Heart right ventricle (tissue), 16 donors: ENCODE measurements at regions of chr1 and their contacts with region 1.

Region 1: GRCh38 chr1:96966536-96967138 is 245.1 kb downstream of the PTBP2 start:
- DNase-seq: peak; percentile 55 to 74
- ATAC-seq: peak in 5 of 8 donors; percentile 62 to 76 (median 67)
- H3K4me3 ChIP-seq: peak overlapping the region in 1 of 10 donors; percentile 1
- H3K27ac ChIP-seq: no peak overlapping the region
- H3K4me1 ChIP-seq: peaks cover 0 to 15% (median 0%) of the 10 kb centered on the region in 9 donors
- H3K27me3 ChIP-seq: peaks cover 0 to 30% (median 10%) of the 10 kb centered on the region in 7 donors
- CTCF ChIP-seq: peak; percentile 81 to 96 (median 92)

Region 2: GRCh38 chr1:96955307-96956012 is 11.2 kb before region 1 on chr1:
- intact Hi-C with region 1: no loop called
- DNase-seq: no peak
- ATAC-seq: no peak
- H3K4me3 ChIP-seq: no peak overlapping the region
- H3K27ac ChIP-seq: no peak overlapping the region
- H3K4me1 ChIP-seq: no peaks in the 10 kb centered on the region
- H3K27me3 ChIP-seq: no peaks in the 10 kb centered on the region
- CTCF ChIP-seq: no peak

Region 3: DNA sequence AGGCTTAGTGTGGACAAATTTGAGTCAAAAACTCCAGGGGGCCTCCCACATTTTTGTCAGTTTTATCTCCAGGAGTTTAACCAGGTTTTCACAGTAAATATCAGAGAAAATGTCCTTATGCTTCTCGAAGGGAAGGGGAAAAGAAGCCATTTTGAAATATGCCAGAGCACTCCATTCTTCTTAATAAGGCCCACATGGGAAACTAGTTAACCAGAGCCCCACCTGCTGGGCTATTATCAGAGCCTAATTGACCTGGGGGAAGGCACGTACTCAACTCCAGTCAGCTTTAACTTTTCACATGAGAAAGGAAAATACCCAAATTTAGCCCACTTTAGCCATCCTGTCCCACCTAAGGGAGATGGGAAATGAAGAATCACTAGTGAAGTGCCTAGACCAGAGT is 51.3 kb after region 1 on chr1:
- intact Hi-C with region 1: loop called in 1 of 10 experiments (anchors 5 kb)
- DNase-seq: no peak
- ATAC-seq: no peak
- H3K4me3 ChIP-seq: no peak overlapping the region
- H3K27ac ChIP-seq: no peak overlapping the region
- H3K4me1 ChIP-seq: peaks cover 0 to 10% (median 0%) of the 10 kb centered on the region in 9 donors
- H3K27me3 ChIP-seq: no peaks in the 10 kb centered on the region
- CTCF ChIP-seq: no peak

Region 4: DNA sequence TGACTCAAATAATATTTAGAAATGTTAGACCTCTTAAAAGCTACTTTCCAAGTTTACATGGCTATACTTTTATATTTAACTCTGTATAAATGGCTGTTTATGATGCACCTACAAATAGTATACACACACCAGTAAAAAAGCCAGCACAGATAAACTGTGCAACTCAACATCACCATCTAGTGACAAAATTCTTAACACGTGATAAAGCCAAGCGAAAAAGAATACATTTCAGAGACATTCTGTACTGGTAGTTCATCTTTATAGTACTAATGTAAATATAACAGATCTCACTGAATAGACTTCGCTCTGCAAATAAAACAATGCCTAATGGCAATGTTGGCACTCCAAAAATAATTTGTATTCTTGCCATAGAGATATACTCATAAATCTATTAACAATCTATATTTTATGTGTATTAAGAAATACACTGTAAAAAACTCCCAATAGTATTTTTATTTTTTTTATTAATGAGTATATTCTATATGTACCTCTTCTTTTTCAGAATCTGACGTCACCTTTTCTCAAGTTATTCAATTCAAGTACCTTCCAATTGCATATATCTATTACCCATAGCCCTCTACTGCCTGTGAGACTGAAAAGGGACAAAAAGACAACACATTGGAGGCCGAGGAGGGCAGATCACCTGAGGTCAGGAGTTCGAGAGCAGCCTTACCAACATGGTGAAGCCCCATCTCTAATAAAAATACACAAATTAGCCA is 854.0 kb after region 1 on chr1:
- intact Hi-C with region 1: loop called in 1 of 10 experiments (anchors 10 kb)
- DNase-seq: no peak
- ATAC-seq: peak in 3 of 8 donors; percentile 48 to 55 (median 52)
- H3K4me3 ChIP-seq: no peak overlapping the region
- H3K27ac ChIP-seq: no peak overlapping the region
- H3K4me1 ChIP-seq: peaks cover 0 to 10% (median 5%) of the 10 kb centered on the region in 9 donors
- H3K27me3 ChIP-seq: no peaks in the 10 kb centered on the region
- CTCF ChIP-seq: peak; percentile 21 to 74 (median 59)

Region 5: DNA sequence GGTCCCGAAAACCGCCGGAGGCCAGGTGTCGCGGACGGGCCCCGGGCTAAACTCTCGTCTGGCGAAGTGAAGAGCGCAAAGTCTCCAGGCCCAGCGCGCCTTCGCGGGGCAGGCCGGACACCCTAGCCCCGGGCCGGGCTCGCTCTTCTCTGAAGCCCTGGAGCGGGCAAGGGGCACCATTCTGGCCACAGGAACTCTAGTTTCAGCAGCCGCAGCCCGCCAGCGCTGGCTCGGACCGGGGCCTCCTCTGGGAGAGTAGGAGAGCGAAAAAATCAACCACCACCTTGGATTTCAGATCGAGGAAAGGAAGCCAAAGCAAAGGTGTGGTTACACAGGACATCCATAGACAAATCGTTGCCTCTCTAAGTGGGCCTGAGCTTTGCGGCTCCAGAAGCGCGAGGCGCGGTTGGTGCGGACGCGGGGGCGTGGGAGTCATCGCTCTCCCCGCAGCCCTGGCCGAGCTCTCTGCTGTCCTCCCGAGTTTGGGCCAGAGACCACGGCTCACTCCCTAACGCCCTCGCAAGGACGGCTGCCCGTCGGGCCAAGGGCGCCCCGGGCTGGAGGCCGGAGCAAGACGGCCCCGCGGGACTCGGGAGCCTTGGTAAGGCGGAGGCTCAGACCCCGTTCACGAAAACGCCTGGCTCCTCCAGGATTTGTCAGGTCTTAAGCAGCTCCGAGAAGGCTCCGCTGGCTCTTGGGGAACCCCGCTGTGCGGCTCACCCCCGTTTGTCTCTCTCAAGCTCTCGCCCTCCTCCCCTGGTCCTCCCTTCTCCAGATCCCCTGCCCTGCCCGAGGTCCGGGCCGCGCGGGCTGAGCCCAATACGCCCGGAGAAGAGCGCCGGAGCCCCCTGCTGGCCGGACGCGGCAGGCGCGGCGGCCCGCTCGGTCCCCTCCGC is 1087.1 kb after region 1 on chr1:
- intact Hi-C with region 1: loop called in 9 of 10 experiments (anchors 5 kb)
- DNase-seq: peak; percentile 18 to 65
- ATAC-seq: peak; percentile 92 to 99 (median 96)
- H3K4me3 ChIP-seq: peak overlapping the region; percentile 7 to 59 (median 55)
- H3K27ac ChIP-seq: no peak overlapping the region
- H3K4me1 ChIP-seq: peaks cover 0 to 20% (median 12%) of the 10 kb centered on the region in 9 donors
- H3K27me3 ChIP-seq: peaks cover 0 to 96% (median 83%) of the 10 kb centered on the region in 7 donors
- CTCF ChIP-seq: peak; percentile 83 to 97 (median 89)

Region 6: DNA sequence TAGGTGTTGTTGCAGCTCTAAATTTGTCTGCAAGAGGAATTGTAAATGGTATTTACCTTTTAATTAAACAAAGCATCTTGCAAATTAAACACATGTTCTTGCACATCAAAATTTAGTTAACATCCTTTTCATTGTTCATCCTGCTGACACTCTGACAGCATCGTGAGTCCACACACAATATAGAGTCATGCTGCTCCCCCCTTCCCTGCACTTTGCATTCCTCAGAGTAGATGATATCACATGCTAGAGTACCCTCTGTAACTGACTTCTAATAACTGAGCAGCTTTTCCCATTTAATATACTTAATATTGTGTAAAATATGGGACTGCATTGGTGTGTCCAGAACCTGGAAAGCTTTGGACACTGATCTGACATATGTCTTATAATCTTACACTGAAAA is 1093.0 kb after region 1 on chr1:
- intact Hi-C with region 1: loop called in 9 of 10 experiments (anchors 5 kb)
- DNase-seq: no peak
- ATAC-seq: no peak
- H3K4me3 ChIP-seq: no peak overlapping the region
- H3K27ac ChIP-seq: no peak overlapping the region
- H3K4me1 ChIP-seq: no peaks in the 10 kb centered on the region
- H3K27me3 ChIP-seq: peaks cover 0 to 56% (median 36%) of the 10 kb centered on the region in 7 donors
- CTCF ChIP-seq: no peak

Region 7: GRCh38 chr1:98468111-98468717 is 1501.6 kb after region 1 on chr1:
- intact Hi-C with region 1: loop called in 2 of 10 experiments (anchors 10 kb)
- DNase-seq: no peak
- ATAC-seq: no peak
- H3K4me3 ChIP-seq: no peak overlapping the region
- H3K27ac ChIP-seq: no peak overlapping the region
- H3K4me1 ChIP-seq: no peaks in the 10 kb centered on the region
- H3K27me3 ChIP-seq: peaks cover 0 to 7% (median 0%) of the 10 kb centered on the region in 7 donors
- CTCF ChIP-seq: peak; percentile 38 to 80 (median 69)